ENCODE measurements at regions of chr10 and their contacts with region 1.

Region 1: GRCh38 chr10:102835007-102835482 is 2.2 kb downstream of the CYP17A1 start:
- DNase-seq: peak; percentile 85
- H3K4me3 Mint-ChIP-seq: no peak overlapping the region
- H3K27ac Mint-ChIP-seq: no peak overlapping the region
- H3K4me1 Mint-ChIP-seq: no peaks in the 10 kb centered on the region
- H3K27me3 Mint-ChIP-seq: peaks cover 15% of the 10 kb centered on the region

Region 2: DNA sequence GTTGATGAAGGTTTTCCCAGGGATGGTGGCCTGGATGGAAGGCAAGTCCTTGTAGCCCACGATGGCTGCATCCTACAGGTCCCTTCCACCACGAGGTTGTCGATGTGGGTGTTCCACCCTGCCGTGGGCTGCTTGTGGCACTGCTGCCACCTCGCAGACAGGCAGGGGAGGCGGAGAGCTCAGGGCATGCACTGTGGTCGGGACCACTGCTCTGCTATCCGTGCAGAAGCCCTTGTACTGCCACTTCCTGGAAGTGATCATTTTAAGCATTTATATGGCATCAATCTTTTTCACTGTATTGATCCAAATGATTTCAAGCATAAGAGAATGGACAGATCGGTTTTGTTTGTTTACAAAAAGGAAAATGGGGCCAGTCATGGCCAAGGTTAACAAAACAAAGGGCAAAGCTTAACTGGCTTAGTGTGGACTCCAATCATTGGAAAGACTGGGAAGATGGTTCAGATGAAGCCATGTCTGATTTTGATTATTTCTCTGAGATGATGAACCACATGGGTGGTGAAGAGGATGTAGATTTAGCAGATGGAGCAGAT is 10.4 kb after region 1 on chr10:
- CTCF ChIA-PET with region 1: interaction called, 11 read pairs
- DNase-seq: no peak
- H3K4me3 Mint-ChIP-seq: no peak overlapping the region
- H3K27ac Mint-ChIP-seq: no peak overlapping the region
- H3K4me1 Mint-ChIP-seq: no peaks in the 10 kb centered on the region
- H3K27me3 Mint-ChIP-seq: peaks cover 6% of the 10 kb centered on the region

Region 3: GRCh38 chr10:103069453-103070331 is 234.6 kb after region 1 on chr10:
- CTCF ChIA-PET with region 1: interaction called, 13 read pairs
- DNase-seq: peak; percentile 83
- H3K4me3 Mint-ChIP-seq: no peak overlapping the region
- H3K27ac Mint-ChIP-seq: peak overlapping the region; percentile 75
- H3K4me1 Mint-ChIP-seq: peaks cover 40% of the 10 kb centered on the region
- H3K27me3 Mint-ChIP-seq: no peaks in the 10 kb centered on the region

Measured in activated naive CD4-positive, alpha-beta T cell treated with anti-CD3 and anti-CD28 coated beads, Interleukin-2, amount 10 ng/mL, durations not matched to agents 7 days and 5 days (primary cell).